ENCODE measurements at regions of chrX and their contacts with region 1.

Region 1: DNA sequence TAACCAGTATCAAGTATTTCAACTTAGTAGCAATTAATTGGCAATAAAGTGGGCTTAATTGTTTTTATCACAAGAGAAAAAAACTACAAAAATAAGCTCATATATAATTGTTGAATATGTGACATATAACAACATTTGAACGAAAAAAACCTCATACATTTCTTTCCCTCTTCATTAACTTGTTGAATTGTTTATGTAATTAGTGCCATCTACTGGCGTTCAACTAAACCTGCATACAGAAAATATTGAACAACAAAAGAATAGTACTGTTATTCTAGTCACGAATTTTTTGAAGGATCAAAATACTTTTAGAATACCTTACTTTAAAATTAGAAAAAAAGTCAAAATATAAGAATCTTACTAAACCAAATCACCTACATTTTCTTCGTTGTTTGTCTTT is 586.5 kb upstream of the FTHL17 start:
- DNase-seq: peak; percentile 28
- H3K4me3 ChIP-seq: no peak overlapping the region
- H3K27ac ChIP-seq: no peak overlapping the region
- H3K4me1 ChIP-seq: no peaks in the 10 kb centered on the region
- H3K27me3 ChIP-seq: no peaks in the 10 kb centered on the region
- CTCF ChIP-seq: peak; percentile 13 to 22
- POLR2A ChIP-seq: no peak

Region 2: DNA sequence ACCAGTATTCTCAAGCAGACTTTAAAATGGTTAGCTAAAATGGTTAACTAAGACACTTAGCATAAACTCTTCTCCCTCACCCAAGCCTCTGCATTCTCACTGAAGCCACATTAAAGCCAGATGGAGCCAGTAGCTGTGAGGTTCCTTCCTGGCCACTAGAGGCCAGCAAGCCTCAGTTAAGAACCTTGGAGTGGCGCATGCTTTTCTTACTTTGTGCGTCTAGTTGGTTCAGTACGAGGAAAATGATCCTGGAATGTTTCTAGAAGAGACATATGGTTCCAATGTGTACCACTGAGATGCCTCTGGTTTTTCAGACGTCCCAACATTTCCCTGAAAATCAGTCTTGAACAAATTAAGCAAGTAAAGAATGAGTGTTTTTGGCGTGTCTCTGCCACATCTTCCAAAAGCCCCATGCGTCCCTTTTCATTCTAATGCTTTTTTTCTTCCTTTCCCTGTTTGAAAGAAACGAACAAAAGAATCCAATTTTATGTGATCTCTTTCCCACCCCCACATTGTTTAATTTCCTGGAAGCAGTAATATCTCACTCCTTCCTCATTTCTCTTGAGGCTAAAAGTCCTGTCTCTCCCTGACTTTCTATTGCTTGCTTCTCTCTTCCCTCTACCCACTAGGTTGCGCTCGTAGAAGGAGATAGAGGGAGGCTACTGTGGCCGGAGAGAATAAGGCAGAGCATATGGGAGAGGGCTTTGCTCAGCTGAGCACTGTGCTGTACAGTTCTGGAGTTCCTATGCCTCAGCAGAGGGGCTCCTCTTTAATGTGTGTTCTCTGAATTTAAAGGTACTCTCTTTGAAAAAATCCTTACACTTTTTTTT is 686.4 kb before region 1 on chrX:
- CTCF ChIA-PET with region 1: no interaction called
- POLR2A ChIA-PET with region 1: no interaction called
- dilution Hi-C with region 1: no loop called
- intact Hi-C with region 1: loop called (anchors 5 kb)
- DNase-seq: peak; percentile 23
- H3K4me3 ChIP-seq: peak overlapping the region in 1 of 3 experiments; percentile 8
- H3K27ac ChIP-seq: no peak overlapping the region
- H3K4me1 ChIP-seq: no peaks in the 10 kb centered on the region
- H3K27me3 ChIP-seq: peaks cover 0 to 1% of the 10 kb centered on the region in 2 experiments
- CTCF ChIP-seq: peak; percentile 54 to 67
- POLR2A ChIP-seq: no peak

Region 3: DNA sequence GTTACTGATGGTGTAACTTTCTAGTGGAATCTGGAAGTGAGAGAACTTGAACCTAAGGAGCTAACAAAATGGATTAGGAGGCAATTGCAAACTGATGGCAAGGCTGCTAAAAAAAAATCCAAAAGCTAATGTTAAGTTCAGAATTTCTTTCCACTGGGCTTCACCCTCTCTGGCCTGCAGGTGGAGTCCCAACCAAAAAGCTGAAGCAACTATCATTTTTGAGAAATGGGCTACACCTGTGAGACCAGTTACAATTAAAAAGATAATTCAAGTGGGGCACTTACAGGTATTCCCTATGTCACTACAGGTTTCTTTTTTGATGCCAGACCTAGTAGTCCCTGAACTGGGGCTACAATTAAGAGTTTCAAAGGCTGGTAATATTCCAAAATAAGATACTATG is 444.4 kb before region 1 on chrX:
- CTCF ChIA-PET with region 1: interaction called, 37 read pairs
- POLR2A ChIA-PET with region 1: no interaction called
- dilution Hi-C with region 1: no loop called
- intact Hi-C with region 1: loop called (anchors 1 kb)
- DNase-seq: peak; percentile 19
- H3K4me3 ChIP-seq: no peak overlapping the region
- H3K27ac ChIP-seq: no peak overlapping the region
- H3K4me1 ChIP-seq: peaks cover 20% of the 10 kb centered on the region
- H3K27me3 ChIP-seq: no peaks in the 10 kb centered on the region
- CTCF ChIP-seq: peak; percentile 19 to 40
- POLR2A ChIP-seq: no peak

Region 4: GRCh38 chrX:31293409-31293808 is 365.0 kb before region 1 on chrX:
- CTCF ChIA-PET with region 1: interaction called, 6 read pairs
- POLR2A ChIA-PET with region 1: no interaction called
- dilution Hi-C with region 1: no loop called
- intact Hi-C with region 1: loop called (anchors 5 kb)
- DNase-seq: peak; percentile 13
- H3K4me3 ChIP-seq: no peak overlapping the region
- H3K27ac ChIP-seq: no peak overlapping the region
- H3K4me1 ChIP-seq: no peaks in the 10 kb centered on the region
- H3K27me3 ChIP-seq: no peaks in the 10 kb centered on the region
- CTCF ChIP-seq: peak in 1 of 2 donors; percentile 16
- POLR2A ChIP-seq: no peak

Region 5: DNA sequence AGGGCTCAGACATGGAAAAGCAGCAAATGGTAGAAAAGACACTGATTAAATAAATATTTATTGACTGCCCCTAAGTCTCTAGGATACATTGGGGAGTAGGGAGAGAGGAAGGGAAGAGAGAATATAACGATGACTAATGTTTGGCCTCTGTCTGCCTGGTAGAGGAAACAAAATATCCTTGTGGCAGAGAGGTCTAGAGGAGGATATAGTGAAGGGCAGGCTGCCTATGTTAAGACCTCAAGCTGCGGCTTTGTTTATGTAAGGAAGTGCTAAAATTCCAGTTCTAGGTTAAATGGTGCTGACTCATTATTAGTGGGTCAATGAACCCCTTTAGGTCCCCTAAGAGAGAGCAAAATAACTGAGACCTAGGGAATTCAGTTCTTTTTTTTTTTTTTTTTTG is 159.3 kb before region 1 on chrX:
- CTCF ChIA-PET with region 1: interaction called, 4 read pairs
- POLR2A ChIA-PET with region 1: no interaction called
- dilution Hi-C with region 1: no loop called
- intact Hi-C with region 1: loop called (anchors 10 kb)
- DNase-seq: peak; percentile 85
- H3K4me3 ChIP-seq: no peak overlapping the region
- H3K27ac ChIP-seq: peak overlapping the region; percentile 53
- H3K4me1 ChIP-seq: peaks cover 22% of the 10 kb centered on the region
- H3K27me3 ChIP-seq: no peaks in the 10 kb centered on the region
- CTCF ChIP-seq: no peak
- POLR2A ChIP-seq: peak; percentile 41

Region 6: GRCh38 chrX:31847773-31848172 is 189.4 kb after region 1 on chrX:
- CTCF ChIA-PET with region 1: no interaction called
- POLR2A ChIA-PET with region 1: no interaction called
- dilution Hi-C with region 1: no loop called
- intact Hi-C with region 1: no loop called
- DNase-seq: peak; percentile 20
- H3K4me3 ChIP-seq: no peak overlapping the region
- H3K27ac ChIP-seq: no peak overlapping the region
- H3K4me1 ChIP-seq: peaks cover 8% of the 10 kb centered on the region
- H3K27me3 ChIP-seq: no peaks in the 10 kb centered on the region
- CTCF ChIP-seq: no peak
- POLR2A ChIP-seq: no peak

Region 7: GRCh38 chrX:31858915-31859314 is 200.6 kb after region 1 on chrX:
- CTCF ChIA-PET with region 1: no interaction called
- POLR2A ChIA-PET with region 1: no interaction called
- dilution Hi-C with region 1: no loop called
- intact Hi-C with region 1: no loop called
- DNase-seq: no peak
- H3K4me3 ChIP-seq: no peak overlapping the region
- H3K27ac ChIP-seq: no peak overlapping the region
- H3K4me1 ChIP-seq: no peaks in the 10 kb centered on the region
- H3K27me3 ChIP-seq: no peaks in the 10 kb centered on the region
- CTCF ChIP-seq: no peak
- POLR2A ChIP-seq: no peak

Region 8: GRCh38 chrX:31909850-31910547 is 251.6 kb after region 1 on chrX:
- CTCF ChIA-PET with region 1: no interaction called
- POLR2A ChIA-PET with region 1: no interaction called
- dilution Hi-C with region 1: no loop called
- intact Hi-C with region 1: no loop called
- DNase-seq: no peak
- H3K4me3 ChIP-seq: no peak overlapping the region
- H3K27ac ChIP-seq: no peak overlapping the region
- H3K4me1 ChIP-seq: no peaks in the 10 kb centered on the region
- H3K27me3 ChIP-seq: no peaks in the 10 kb centered on the region
- CTCF ChIP-seq: no peak
- POLR2A ChIP-seq: no peak

Measured in endothelial cell of umbilical vein (primary cell).